B cell (primary cell): ENCODE measurements at regions of chr4 and their contacts with region 1.

Region 1: DNA sequence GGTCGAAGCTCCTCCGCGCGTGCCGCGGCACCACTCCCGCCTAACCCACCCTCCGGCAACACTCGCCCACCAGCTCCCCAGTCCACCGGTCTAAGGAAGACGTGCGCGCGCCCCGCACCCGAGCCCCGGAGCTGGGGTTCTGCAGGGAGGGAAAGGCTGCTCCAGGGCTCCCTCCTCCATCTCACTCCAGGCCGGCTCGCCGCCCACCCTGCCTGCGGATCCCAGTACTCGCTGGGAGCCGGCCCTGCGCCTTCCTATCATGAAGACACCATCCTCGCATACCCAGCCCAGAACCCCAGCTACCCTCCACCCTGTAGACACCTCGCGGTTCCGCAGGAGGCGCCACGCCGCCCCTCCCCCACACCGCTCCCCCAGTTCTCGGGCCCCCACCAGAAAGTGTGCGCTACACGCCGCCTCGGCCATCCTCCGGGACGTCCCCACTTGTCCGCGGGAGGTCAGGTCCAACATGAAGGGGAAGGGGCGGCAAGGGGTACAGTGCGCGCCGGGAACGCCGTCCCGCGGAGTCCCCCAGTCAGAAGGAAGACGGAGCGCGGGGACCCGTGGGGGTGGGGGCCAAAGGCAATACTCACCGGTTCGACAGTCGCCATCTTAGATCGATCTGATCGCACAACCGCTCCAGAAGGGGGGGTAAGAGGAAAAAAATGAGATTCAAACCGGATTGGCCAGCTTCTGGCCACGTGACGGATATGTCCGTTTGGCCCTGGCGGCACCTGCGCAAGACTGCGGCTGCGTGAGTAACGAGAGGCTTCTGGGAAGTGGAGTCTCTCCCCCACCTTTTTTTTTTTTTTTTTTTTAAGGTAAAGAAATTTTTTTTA is at the start of gene EIF4E:
- DNase-seq: peak; percentile 99
- ATAC-seq: peak; percentile 77
- H3K4me3 ChIP-seq: peak within 1 kb of the TSS; percentile 95 to 100 (median 98)
- H3K4me3 Mint-ChIP-seq: peak within 1 kb of the TSS; percentile 99
- H3K27ac ChIP-seq: peak within 1 kb of the TSS; percentile 91 to 93
- H3K27ac Mint-ChIP-seq: peak within 1 kb of the TSS; percentile 99
- H3K4me1 ChIP-seq: peaks cover 31 to 32% of the 10 kb centered on the region in 2 donors
- H3K4me1 Mint-ChIP-seq: peaks cover 50% of the 10 kb centered on the region
- H3K27me3 ChIP-seq: no peaks in the 10 kb centered on the region
- H3K27me3 Mint-ChIP-seq: no peaks in the 10 kb centered on the region
- CTCF ChIP-seq: peak; percentile 67
- total RNA-seq, gene EIF4E: 71.1 and 71.2 TPM in 2 replicates

Region 2: GRCh38 chr4:98143001-98143899 is 785.5 kb before region 1 on chr4 and contains the start of gene STPG2:
- CTCF ChIA-PET with region 1: interaction called, 5 read pairs
- POLR2A ChIA-PET with region 1: interaction called, 11 read pairs
- intact Hi-C with region 1: loop called (anchors 1 kb)
- DNase-seq: peak; percentile 97
- ATAC-seq: peak; percentile 98
- H3K4me3 ChIP-seq: peak within 1 kb of the TSS; percentile 69 to 86 (median 84)
- H3K4me3 Mint-ChIP-seq: peak within 1 kb of the TSS; percentile 94
- H3K27ac ChIP-seq: peak within 1 kb of the TSS; percentile 91 to 93
- H3K27ac Mint-ChIP-seq: peak within 1 kb of the TSS; percentile 96
- H3K4me1 ChIP-seq: peaks cover 15 to 18% of the 10 kb centered on the region in 2 donors
- H3K4me1 Mint-ChIP-seq: peaks cover 24% of the 10 kb centered on the region
- H3K27me3 ChIP-seq: no peaks in the 10 kb centered on the region
- H3K27me3 Mint-ChIP-seq: no peaks in the 10 kb centered on the region
- CTCF ChIP-seq: peak; percentile 77
- total RNA-seq, gene STPG2: 0.41 and 0.49 TPM in 2 replicates

Region 3: GRCh38 chr4:98260579-98261290 is 668.0 kb before region 1 on chr4:
- CTCF ChIA-PET with region 1: no interaction called
- POLR2A ChIA-PET with region 1: interaction called, 9 read pairs
- intact Hi-C with region 1: loop called (anchors 1 kb)
- DNase-seq: peak; percentile 95
- ATAC-seq: peak; percentile 91
- H3K4me3 ChIP-seq: peak overlapping the region; percentile 71 to 98 (median 95)
- H3K4me3 Mint-ChIP-seq: peak overlapping the region; percentile 97
- H3K27ac ChIP-seq: peak overlapping the region; percentile 84 to 90
- H3K27ac Mint-ChIP-seq: peak overlapping the region; percentile 98
- H3K4me1 ChIP-seq: peaks cover 18 to 25% of the 10 kb centered on the region in 2 donors
- H3K4me1 Mint-ChIP-seq: peaks cover 40% of the 10 kb centered on the region
- H3K27me3 ChIP-seq: no peaks in the 10 kb centered on the region
- H3K27me3 Mint-ChIP-seq: no peaks in the 10 kb centered on the region
- CTCF ChIP-seq: no peak

Region 4: DNA sequence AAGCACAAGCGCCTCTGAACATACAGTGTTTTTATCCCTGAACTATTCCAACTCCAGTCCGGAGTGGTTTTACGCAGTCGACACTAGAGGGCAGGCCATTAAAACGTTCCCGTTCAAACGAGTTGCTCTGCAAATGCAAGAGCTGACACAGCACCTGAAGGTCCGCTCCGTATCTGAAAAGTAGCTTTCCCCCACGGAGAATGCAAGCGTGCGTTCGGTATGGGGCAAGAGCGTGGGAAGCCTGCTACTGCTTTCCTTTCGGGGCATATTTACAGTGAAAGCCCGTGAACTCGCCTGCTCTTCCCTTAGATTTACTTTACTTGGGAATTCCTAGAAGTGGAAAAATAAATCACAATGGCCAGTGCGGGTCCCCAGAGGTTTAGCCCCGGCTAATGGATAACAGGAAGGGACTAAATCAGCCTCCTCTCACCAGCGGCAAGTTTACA is 461.1 kb before region 1 on chr4:
- CTCF ChIA-PET with region 1: interaction called, 4 read pairs
- POLR2A ChIA-PET with region 1: interaction called, 3 read pairs
- intact Hi-C with region 1: loop called (anchors 1 kb)
- DNase-seq: peak; percentile 79
- ATAC-seq: peak; percentile 87
- H3K4me3 ChIP-seq: peak overlapping the region; percentile 1 to 55 (median 37)
- H3K4me3 Mint-ChIP-seq: peak overlapping the region; percentile 79
- H3K27ac ChIP-seq: no peak overlapping the region
- H3K27ac Mint-ChIP-seq: peak overlapping the region; percentile 16
- H3K4me1 ChIP-seq: peaks cover 6 to 7% of the 10 kb centered on the region in 2 donors
- H3K4me1 Mint-ChIP-seq: peaks cover 8% of the 10 kb centered on the region
- H3K27me3 ChIP-seq: peaks cover 0 to 3% (median 0%) of the 10 kb centered on the region in 4 experiments
- H3K27me3 Mint-ChIP-seq: peaks cover 4% of the 10 kb centered on the region
- CTCF ChIP-seq: peak; percentile 72

Region 5: GRCh38 chr4:99088481-99089365 is 160.0 kb after region 1 on chr4 and contains the start of gene ADH5:
- CTCF ChIA-PET with region 1: interaction called, 3 read pairs
- POLR2A ChIA-PET with region 1: interaction called, 11 read pairs
- intact Hi-C with region 1: loop called (anchors 1 kb)
- DNase-seq: peak; percentile 90
- ATAC-seq: peak; percentile 95
- H3K4me3 ChIP-seq: peak within 1 kb of the TSS; percentile 75 to 99 (median 96)
- H3K4me3 Mint-ChIP-seq: peak within 1 kb of the TSS; percentile 98
- H3K27ac ChIP-seq: peak within 1 kb of the TSS; percentile 84
- H3K27ac Mint-ChIP-seq: peak within 1 kb of the TSS; percentile 98
- H3K4me1 ChIP-seq: peaks cover 15 to 25% of the 10 kb centered on the region in 2 donors
- H3K4me1 Mint-ChIP-seq: peaks cover 46% of the 10 kb centered on the region
- H3K27me3 ChIP-seq: no peaks in the 10 kb centered on the region
- H3K27me3 Mint-ChIP-seq: no peaks in the 10 kb centered on the region
- CTCF ChIP-seq: no peak
- total RNA-seq, gene ADH5: 59.2 and 65.6 TPM in 2 replicates

Region 6: GRCh38 chr4:99655308-99656081 is 726.8 kb after region 1 on chr4:
- CTCF ChIA-PET with region 1: no interaction called
- POLR2A ChIA-PET with region 1: no interaction called
- intact Hi-C with region 1: no loop called
- DNase-seq: no peak
- ATAC-seq: no peak
- H3K4me3 ChIP-seq: no peak overlapping the region
- H3K4me3 Mint-ChIP-seq: no peak overlapping the region
- H3K27ac ChIP-seq: no peak overlapping the region
- H3K27ac Mint-ChIP-seq: no peak overlapping the region
- H3K4me1 ChIP-seq: no peaks in the 10 kb centered on the region
- H3K4me1 Mint-ChIP-seq: no peaks in the 10 kb centered on the region
- H3K27me3 ChIP-seq: no peaks in the 10 kb centered on the region
- H3K27me3 Mint-ChIP-seq: peaks cover 7% of the 10 kb centered on the region
- CTCF ChIP-seq: no peak